HEK293 (cell line): ENCODE measurements at regions of chr16 and their contacts with region 1.

Region 1: GRCh38 chr16:69132424-69133252 is at the starts of genes CHTF8 and UTP4:
- H3K4me3 ChIP-seq: peak within 1 kb of the TSS; percentile 83
- H3K27ac ChIP-seq: peak within 1 kb of the TSS; percentile 95
- H3K4me1 ChIP-seq: peaks cover 3% of the 10 kb centered on the region; the same call in 1 of the 2 replicates
- CTCF ChIP-seq: 0 out of 2 replicates have a peak, but pooled peaks have one; percentile 9

Region 2: GRCh38 chr16:68902008-68902968 is 230.3 kb before region 1 on chr16:
- CTCF ChIA-PET with region 1: interaction called, 11 read pairs
- POLR2A ChIA-PET with region 1: interaction called, 5 read pairs
- H3K4me3 ChIP-seq: no peak overlapping the region
- H3K27ac ChIP-seq: no peak overlapping the region
- H3K4me1 ChIP-seq: no peaks in the 10 kb centered on the region
- CTCF ChIP-seq: 0 out of 2 replicates have a peak, but pooled peaks have one; percentile 20

Region 3: DNA sequence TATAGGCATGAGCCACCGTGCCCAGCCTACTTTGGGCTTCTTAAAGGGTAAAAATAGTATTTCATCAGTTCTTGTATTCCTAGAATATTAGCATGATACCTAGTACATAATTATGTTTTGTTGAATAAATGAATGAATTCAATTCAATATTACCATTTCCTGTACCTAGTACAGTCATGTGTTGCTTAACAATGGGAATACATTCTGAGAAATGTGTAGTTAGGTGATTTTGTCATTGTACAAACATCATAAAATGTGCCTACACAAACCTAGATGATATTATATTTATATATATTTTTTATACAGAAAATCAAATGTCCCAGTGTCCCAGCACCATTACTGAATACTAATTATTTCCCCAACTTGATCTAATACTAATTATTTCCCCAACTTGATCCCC is 112.8 kb before region 1 on chr16:
- CTCF ChIA-PET with region 1: no interaction called
- POLR2A ChIA-PET with region 1: no interaction called
- H3K4me3 ChIP-seq: no peak overlapping the region
- H3K27ac ChIP-seq: no peak overlapping the region
- H3K4me1 ChIP-seq: no peaks in the 10 kb centered on the region
- CTCF ChIP-seq: no peak

Region 4: GRCh38 chr16:69093974-69094373 is 38.7 kb before region 1 on chr16:
- CTCF ChIA-PET with region 1: no interaction called
- POLR2A ChIA-PET with region 1: no interaction called
- H3K4me3 ChIP-seq: no peak overlapping the region
- H3K27ac ChIP-seq: no peak overlapping the region
- H3K4me1 ChIP-seq: peaks cover 2% of the 10 kb centered on the region; the same call in 1 of the 2 replicates
- CTCF ChIP-seq: no peak

Region 5: GRCh38 chr16:69112285-69113129 is 20.1 kb before region 1 on chr16:
- CTCF ChIA-PET with region 1: interaction called, 18 read pairs
- POLR2A ChIA-PET with region 1: interaction called, 3 read pairs
- H3K4me3 ChIP-seq: no peak overlapping the region
- H3K27ac ChIP-seq: no peak overlapping the region
- H3K4me1 ChIP-seq: no peaks in the 10 kb centered on the region
- CTCF ChIP-seq: peak; percentile 69

Region 6: GRCh38 chr16:69150146-69150865 is 17.7 kb after region 1 on chr16:
- CTCF ChIA-PET with region 1: interaction called, 11 read pairs
- POLR2A ChIA-PET with region 1: no interaction called
- H3K4me3 ChIP-seq: no peak overlapping the region
- H3K27ac ChIP-seq: no peak overlapping the region
- H3K4me1 ChIP-seq: no peaks in the 10 kb centered on the region
- CTCF ChIP-seq: peak; percentile 67; the same call in 1 of the 2 replicates

Region 7: DNA sequence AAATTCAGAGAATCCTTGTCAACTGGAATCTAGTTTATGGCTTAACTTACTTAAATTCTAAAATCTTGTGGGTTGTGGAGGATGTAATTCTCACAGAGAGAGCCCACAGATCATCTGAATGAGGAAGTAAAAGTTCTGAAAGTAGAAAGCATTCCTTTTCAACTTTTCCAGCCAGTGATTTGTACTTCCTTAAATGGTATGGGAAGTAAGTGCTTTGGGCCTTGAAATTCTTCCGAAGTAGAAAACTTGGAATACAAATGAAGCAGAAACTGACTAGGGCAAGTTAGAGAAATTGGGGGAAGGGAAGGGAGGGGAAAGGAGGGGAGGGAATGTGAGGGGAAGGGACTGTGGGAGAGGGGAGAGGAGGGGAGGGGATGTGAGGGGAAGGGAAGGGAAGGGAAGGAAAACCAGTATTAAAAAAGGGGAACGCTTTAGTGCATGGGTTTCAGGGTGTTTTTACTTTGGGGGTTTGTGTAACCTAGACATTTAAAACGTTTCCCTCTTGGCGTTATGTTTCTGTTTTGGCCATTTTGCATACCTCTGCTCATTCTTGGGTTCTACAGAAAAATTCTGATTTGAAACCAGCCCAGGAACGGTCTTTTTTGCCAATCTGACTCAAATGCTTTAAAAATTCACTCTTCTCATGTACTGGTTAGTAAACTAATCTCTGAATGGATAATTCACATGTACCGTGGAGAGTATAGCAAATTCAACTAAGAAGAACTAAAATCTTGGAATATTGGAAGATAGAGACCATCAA is 38.9 kb after region 1 on chr16:
- CTCF ChIA-PET with region 1: no interaction called
- POLR2A ChIA-PET with region 1: no interaction called
- H3K4me3 ChIP-seq: no peak overlapping the region
- H3K27ac ChIP-seq: no peak overlapping the region
- H3K4me1 ChIP-seq: peaks cover 10% of the 10 kb centered on the region; the same call in 1 of the 2 replicates
- CTCF ChIP-seq: no peak

Region 8: GRCh38 chr16:69186642-69187445 is 54.2 kb after region 1 on chr16 and contains the start of gene SNTB2:
- CTCF ChIA-PET with region 1: no interaction called
- POLR2A ChIA-PET with region 1: interaction called, 12 read pairs
- H3K4me3 ChIP-seq: peak within 1 kb of the TSS; percentile 88
- H3K27ac ChIP-seq: peak within 1 kb of the TSS; percentile 75
- H3K4me1 ChIP-seq: peaks cover 12% of the 10 kb centered on the region
- CTCF ChIP-seq: no peak

Region 9: GRCh38 chr16:69276148-69277115 is 143.8 kb after region 1 on chr16:
- CTCF ChIA-PET with region 1: no interaction called
- POLR2A ChIA-PET with region 1: no interaction called
- H3K4me3 ChIP-seq: no peak overlapping the region
- H3K27ac ChIP-seq: no peak overlapping the region
- H3K4me1 ChIP-seq: no peaks in the 10 kb centered on the region
- CTCF ChIP-seq: no peak